ENCODE measurements at regions of chr22 and their contacts with region 1.

Region 1: GRCh38 chr22:37316875-37317371 is 34.6 kb downstream of the CYTH4 start:
- DNase-seq: no peak
- H3K4me3 ChIP-seq: no peak overlapping the region
- H3K27ac ChIP-seq: no peak overlapping the region
- H3K4me1 ChIP-seq: peaks cover 0 to 20% (median 4%) of the 10 kb centered on the region in 3 donors
- H3K27me3 ChIP-seq: peaks cover 0 to 88% (median 0%) of the 10 kb centered on the region in 4 donors
- CTCF ChIP-seq: peak; percentile 75 to 93 (median 84)
- POLR2A ChIP-seq: no peak

Region 2: GRCh38 chr22:37428649-37429586 is 112.0 kb after region 1 on chr22:
- intact Hi-C with region 1: loop called (anchors 10 kb)
- DNase-seq: no peak
- H3K4me3 ChIP-seq: no peak overlapping the region
- H3K27ac ChIP-seq: no peak overlapping the region
- H3K4me1 ChIP-seq: peaks cover 9 to 24% (median 10%) of the 10 kb centered on the region in 3 donors
- H3K27me3 ChIP-seq: peaks cover 12 to 100% (median 27%) of the 10 kb centered on the region in 4 donors
- CTCF ChIP-seq: peak; percentile 44 to 67 (median 52)
- POLR2A ChIP-seq: no peak

Region 3: GRCh38 chr22:37454857-37455686 is 138.1 kb after region 1 on chr22:
- intact Hi-C with region 1: loop called (anchors 5 kb)
- DNase-seq: no peak
- H3K4me3 ChIP-seq: no peak overlapping the region
- H3K27ac ChIP-seq: no peak overlapping the region
- H3K4me1 ChIP-seq: no peaks in the 10 kb centered on the region
- H3K27me3 ChIP-seq: peaks cover 0 to 67% (median 0%) of the 10 kb centered on the region in 4 donors
- CTCF ChIP-seq: no peak
- POLR2A ChIP-seq: no peak

Measured in esophagus squamous epithelium (tissue), 5 donors.